Activated T-helper 2 cell treated with anti-CD3 and anti-CD28 coated beads, Interferon-gamma antibody, Interleukin-2, Interleukin-4, amounts not matched to agents 10 μg/mL and 5 μg/mL and 100 μg/mL, durations not matched to agents 14 hours and 24 hours and 36 hours (primary cell): ENCODE measurements at regions of chr5 and their contacts with region 1.

Region 1: DNA sequence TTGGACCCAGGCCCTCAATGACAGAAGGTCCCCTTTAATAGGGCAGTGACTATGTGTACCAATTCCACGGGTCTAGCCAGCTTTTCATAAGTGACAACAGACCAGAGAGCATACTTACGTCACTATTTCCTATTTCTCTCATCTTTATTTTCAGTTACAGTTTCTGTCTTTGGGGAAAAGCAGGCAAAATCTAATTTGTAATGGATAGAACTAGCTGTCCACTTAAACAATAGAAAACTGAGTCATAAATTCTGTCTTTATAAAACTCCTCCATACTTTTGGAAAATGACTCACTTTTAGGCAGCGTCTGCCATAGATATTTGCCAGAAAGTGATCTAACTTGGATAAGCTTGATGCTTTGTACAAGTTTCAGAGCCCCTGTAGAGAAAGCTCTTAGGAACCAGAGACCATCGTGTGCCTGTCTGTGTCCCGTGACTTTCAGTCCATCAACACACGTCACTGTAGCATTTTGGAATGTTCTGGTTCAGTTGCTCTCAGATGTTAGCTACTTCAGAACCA is 101.9 kb downstream of the F2RL2 start:
- DNase-seq: no peak
- H3K4me3 Mint-ChIP-seq: peak overlapping the region; percentile 24
- H3K27ac Mint-ChIP-seq: peak overlapping the region; percentile 82
- H3K4me1 Mint-ChIP-seq: peaks cover 49% of the 10 kb centered on the region
- H3K27me3 Mint-ChIP-seq: no peaks in the 10 kb centered on the region

Region 2: DNA sequence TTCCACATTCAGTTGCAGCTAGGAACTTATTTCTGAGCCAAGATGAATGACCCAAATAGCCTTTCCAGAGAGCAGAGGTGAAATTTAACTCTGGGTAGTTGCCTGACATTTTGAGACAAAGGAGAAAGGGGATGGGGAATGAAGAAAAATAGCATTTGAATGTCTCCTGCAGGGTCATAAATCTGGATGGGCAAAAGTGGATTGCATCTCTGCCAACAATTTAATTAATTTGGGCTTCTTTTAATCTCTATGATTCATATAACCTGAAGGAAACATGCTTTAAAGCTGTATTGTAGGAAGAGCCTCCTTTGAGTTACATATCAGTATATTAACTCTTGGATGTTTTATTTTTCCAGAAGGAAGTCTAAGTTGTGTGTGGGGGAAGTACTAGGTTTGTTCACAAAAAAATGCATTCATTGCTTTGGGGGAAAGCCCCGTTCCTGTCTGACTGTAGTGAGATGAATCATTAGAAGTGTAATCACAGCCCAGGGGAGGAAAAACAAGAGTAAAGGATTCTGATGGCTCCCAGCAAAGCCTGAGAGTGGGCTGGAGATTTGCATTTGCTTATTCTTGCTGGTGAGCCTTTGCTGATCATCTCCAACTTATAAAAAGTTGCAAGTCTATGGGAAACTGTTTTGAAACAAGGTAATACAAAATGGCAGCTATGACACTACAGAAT is 251.2 kb before region 1 on chr5:
- intact Hi-C with region 1: loop called (anchors 2 kb)
- DNase-seq: no peak
- H3K4me3 Mint-ChIP-seq: peak overlapping the region; percentile 49
- H3K27ac Mint-ChIP-seq: peak overlapping the region; percentile 81
- H3K4me1 Mint-ChIP-seq: peaks cover 32% of the 10 kb centered on the region
- H3K27me3 Mint-ChIP-seq: no peaks in the 10 kb centered on the region

Region 3: DNA sequence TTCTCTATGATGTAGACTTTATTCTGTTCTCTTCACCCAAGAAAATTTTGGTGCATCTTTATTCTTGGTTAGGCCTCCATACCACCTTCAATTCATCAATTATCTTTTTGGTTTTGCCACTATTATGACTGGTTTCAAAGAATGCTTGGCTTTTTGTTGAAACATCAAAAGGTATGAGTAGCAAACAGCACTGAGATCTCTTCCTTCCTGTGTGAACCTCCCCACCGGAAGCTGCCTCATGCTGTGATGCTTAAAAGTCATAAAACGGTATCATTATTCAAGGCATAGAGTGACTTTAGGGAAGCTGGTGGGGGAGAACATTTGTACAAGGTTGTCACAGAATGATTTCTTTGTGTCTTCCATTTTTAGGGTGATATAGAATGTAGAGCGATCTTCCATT is 47.6 kb before region 1 on chr5:
- intact Hi-C with region 1: loop called (anchors 5 kb)
- DNase-seq: peak; percentile 49
- H3K4me3 Mint-ChIP-seq: peak overlapping the region; percentile 30
- H3K27ac Mint-ChIP-seq: peak overlapping the region; percentile 80
- H3K4me1 Mint-ChIP-seq: peaks cover 48% of the 10 kb centered on the region
- H3K27me3 Mint-ChIP-seq: no peaks in the 10 kb centered on the region

Region 4: GRCh38 chr5:76582230-76583162 is 61.2 kb after region 1 on chr5:
- intact Hi-C with region 1: loop called (anchors 2 kb)
- DNase-seq: no peak
- H3K4me3 Mint-ChIP-seq: no peak overlapping the region
- H3K27ac Mint-ChIP-seq: peak overlapping the region; percentile 69
- H3K4me1 Mint-ChIP-seq: peaks cover 26% of the 10 kb centered on the region
- H3K27me3 Mint-ChIP-seq: no peaks in the 10 kb centered on the region